ENCODE measurements at regions of chr4 and their contacts with region 1.

Region 1: DNA sequence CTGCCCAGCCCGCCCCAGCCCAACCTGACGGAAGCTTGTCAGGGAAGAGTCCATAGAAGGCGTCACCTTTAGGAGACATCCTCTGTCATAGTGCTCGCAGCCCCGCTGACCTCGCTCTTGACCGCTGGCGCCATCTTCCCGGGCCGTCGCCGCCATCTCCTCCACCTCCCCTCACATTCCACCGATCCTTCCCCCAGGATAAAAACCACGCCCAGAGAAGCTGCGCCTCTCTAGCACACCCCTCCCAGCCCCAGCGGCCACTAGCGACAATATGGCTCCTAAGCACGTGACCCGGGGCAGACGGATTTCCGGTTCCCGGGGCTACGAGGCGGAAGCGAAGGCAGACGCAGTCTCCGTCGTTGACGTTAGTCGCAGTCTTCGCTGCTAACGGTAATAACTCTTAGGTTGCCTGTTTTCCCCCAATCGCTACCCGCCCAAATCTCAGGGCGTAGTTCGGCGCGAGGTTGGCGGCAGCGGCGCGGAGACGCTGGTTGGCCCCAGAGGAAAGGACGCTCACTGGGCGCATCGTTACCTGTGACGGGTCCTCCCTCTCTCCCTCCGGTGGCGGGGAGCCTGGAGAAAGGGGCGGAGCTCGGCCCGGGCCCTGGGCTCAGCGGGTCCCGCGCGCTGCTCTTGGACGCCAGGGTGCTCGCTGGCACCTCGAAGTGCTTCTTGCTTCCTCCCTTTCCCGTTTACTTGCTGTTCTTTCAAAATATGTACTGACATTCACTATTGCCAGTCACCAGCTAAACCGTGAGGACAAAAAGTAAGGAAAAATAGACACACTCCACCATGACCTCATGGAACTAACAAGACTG is at the starts of genes RCHY1 and THAP6:
- DNase-seq: peak; percentile 94
- H3K4me3 Mint-ChIP-seq: no peak within 1 kb of the TSS
- H3K27ac Mint-ChIP-seq: no peak within 1 kb of the TSS
- H3K4me1 Mint-ChIP-seq: peaks cover 46% of the 10 kb centered on the region
- H3K27me3 Mint-ChIP-seq: no peaks in the 10 kb centered on the region
- total RNA-seq, gene RCHY1: 35.6 to 35.7 TPM
- total RNA-seq, gene THAP6: 25.3 to 26.6 TPM

Region 2: GRCh38 chr4:75180790-75181776 is 333.3 kb before region 1 on chr4:
- CTCF ChIA-PET with region 1: no interaction called
- POLR2A ChIA-PET with region 1: no interaction called
- DNase-seq: no peak
- H3K4me3 Mint-ChIP-seq: no peak overlapping the region
- H3K27ac Mint-ChIP-seq: no peak overlapping the region
- H3K4me1 Mint-ChIP-seq: no peaks in the 10 kb centered on the region
- H3K27me3 Mint-ChIP-seq: no peaks in the 10 kb centered on the region

Region 3: GRCh38 chr4:75490155-75490554 is 24.2 kb before region 1 on chr4:
- CTCF ChIA-PET with region 1: interaction called, 4 read pairs
- POLR2A ChIA-PET with region 1: interaction called, 10 read pairs
- DNase-seq: no peak
- H3K4me3 Mint-ChIP-seq: no peak overlapping the region
- H3K27ac Mint-ChIP-seq: no peak overlapping the region
- H3K4me1 Mint-ChIP-seq: peaks cover 7% of the 10 kb centered on the region
- H3K27me3 Mint-ChIP-seq: no peaks in the 10 kb centered on the region

Region 4: DNA sequence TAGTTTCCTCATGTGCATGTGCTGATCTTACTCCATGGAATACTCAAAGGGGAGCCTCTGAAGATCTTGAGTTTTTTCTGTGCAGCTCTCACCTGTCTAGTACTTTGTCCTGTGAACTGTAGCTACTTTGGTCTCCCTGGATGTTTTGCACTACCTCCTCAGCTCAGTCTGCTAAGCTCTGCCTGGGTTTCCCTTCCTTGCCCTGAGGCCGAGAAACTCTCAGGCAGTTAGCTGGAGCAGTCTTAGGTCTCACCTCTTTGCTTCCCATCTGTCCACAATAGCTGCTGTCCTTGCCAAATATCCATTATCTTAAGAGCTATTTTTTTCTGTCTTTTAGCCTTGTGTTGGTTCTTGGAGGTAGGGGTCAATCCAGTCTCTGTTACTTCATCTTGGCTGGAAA is 11.6 kb after region 1 on chr4:
- CTCF ChIA-PET with region 1: no interaction called
- POLR2A ChIA-PET with region 1: interaction called, 21 read pairs
- DNase-seq: no peak
- H3K4me3 Mint-ChIP-seq: no peak overlapping the region
- H3K27ac Mint-ChIP-seq: no peak overlapping the region
- H3K4me1 Mint-ChIP-seq: peaks cover 11% of the 10 kb centered on the region
- H3K27me3 Mint-ChIP-seq: no peaks in the 10 kb centered on the region

Region 5: GRCh38 chr4:75555294-75556164 is 41.2 kb after region 1 on chr4 and contains the start of gene ODAPH:
- CTCF ChIA-PET with region 1: interaction called, 5 read pairs
- POLR2A ChIA-PET with region 1: interaction called, 34 read pairs
- DNase-seq: peak; percentile 71
- H3K4me3 Mint-ChIP-seq: peak within 1 kb of the TSS; percentile 31
- H3K27ac Mint-ChIP-seq: peak within 1 kb of the TSS; percentile 64
- H3K4me1 Mint-ChIP-seq: peaks cover 31% of the 10 kb centered on the region
- H3K27me3 Mint-ChIP-seq: peaks cover 11% of the 10 kb centered on the region
- total RNA-seq, gene ODAPH: 1.9 to 3.5 TPM

Region 6: DNA sequence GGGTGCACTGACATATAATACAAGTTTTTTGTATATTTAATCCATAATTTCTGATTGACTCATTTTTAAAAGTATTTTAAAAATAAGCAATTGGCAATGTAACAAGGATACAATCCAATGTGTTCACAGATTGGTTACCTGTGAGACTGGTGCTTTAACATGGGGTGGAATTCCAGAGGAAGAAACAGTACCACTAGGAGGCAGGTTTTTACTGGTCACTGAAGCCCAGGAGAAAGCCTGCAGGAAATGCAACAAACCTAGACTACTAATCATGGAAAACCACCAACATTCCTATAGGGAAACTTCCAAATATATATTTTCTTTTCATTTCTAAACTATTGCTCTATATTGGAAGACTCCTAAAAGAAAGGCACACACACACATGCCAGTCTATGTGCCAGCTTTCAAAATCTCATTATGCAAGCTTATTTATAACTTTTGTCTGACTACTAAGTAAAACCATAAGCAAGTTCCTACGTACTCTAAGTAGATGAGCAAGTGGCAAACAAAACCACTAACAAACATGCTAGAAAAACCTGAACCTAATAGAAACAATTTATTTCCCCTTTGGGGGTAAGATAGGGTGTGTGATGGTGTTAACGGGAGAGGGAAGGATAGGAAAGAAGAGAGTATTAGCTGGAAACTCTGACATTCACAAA is 139.6 kb after region 1 on chr4:
- CTCF ChIA-PET with region 1: no interaction called
- POLR2A ChIA-PET with region 1: interaction called, 24 read pairs
- DNase-seq: no peak
- H3K4me3 Mint-ChIP-seq: peak overlapping the region; percentile 43
- H3K27ac Mint-ChIP-seq: peak overlapping the region; percentile 90
- H3K4me1 Mint-ChIP-seq: peaks cover 71% of the 10 kb centered on the region
- H3K27me3 Mint-ChIP-seq: no peaks in the 10 kb centered on the region

Region 7: DNA sequence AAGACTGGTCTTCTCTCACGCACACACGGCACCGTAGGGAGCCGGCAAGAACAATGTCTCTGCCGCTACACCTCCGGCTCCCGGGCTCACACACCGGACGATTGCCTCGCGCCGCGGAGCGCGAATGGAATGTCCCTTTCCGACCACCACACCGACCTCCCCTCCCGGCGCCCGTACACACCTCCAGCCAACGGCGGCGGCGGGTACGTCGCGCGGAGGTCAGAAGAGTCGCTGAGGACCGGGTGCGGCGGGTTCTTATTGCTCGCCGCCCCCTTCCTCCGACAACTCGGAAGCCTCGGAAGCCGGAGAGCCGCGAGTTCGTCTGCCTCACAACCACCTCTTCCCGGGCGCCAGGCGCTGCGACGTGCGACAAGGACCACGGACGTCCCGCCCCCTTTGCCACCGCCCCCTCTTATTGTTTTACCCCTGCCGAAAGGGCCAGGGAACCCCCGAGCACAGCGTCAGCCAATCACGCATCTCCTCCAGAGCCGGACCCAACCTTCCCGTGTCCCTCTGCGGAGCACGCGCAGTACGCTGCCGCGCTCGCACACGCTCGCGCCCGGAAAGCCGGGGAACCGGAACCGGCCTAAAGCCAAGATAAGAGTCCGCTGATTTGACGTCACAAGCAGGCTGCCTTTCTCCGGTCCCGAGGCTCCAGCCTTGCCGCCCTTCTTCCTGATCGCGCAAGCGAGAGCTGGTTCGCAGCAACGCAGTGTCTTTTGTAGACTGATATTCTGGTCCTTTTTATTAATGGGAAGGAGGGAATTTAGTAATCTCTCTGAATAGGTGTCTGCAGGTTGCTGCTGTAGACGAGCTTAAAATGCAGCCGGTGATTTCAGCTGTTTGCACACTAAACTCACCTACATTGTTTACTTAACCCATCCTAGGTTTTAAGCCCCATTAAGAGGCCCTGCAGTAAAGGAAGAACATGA is 159.0 kb after region 1 on chr4 and contains the start of gene G3BP2:
- CTCF ChIA-PET with region 1: no interaction called
- POLR2A ChIA-PET with region 1: interaction called, 23 read pairs
- DNase-seq: peak; percentile 98
- H3K4me3 Mint-ChIP-seq: peak within 1 kb of the TSS; percentile 97
- H3K27ac Mint-ChIP-seq: peak within 1 kb of the TSS; percentile 99
- H3K4me1 Mint-ChIP-seq: peaks cover 48% of the 10 kb centered on the region
- H3K27me3 Mint-ChIP-seq: no peaks in the 10 kb centered on the region
- total RNA-seq, gene G3BP2: 185 to 187 TPM

Region 8: GRCh38 chr4:75940692-75941253 is 426.4 kb after region 1 on chr4 and contains the start of gene NAAA:
- CTCF ChIA-PET with region 1: no interaction called
- POLR2A ChIA-PET with region 1: interaction called, 15 read pairs
- DNase-seq: peak; percentile 88
- H3K4me3 Mint-ChIP-seq: peak within 1 kb of the TSS; percentile 99
- H3K27ac Mint-ChIP-seq: peak within 1 kb of the TSS; percentile 94
- H3K4me1 Mint-ChIP-seq: peaks cover 32% of the 10 kb centered on the region
- H3K27me3 Mint-ChIP-seq: no peaks in the 10 kb centered on the region
- total RNA-seq, gene NAAA: 38.7 to 39.3 TPM